Panc1 (cell line): ENCODE measurements at regions of chr6 and their contacts with region 1.

Region 1: DNA sequence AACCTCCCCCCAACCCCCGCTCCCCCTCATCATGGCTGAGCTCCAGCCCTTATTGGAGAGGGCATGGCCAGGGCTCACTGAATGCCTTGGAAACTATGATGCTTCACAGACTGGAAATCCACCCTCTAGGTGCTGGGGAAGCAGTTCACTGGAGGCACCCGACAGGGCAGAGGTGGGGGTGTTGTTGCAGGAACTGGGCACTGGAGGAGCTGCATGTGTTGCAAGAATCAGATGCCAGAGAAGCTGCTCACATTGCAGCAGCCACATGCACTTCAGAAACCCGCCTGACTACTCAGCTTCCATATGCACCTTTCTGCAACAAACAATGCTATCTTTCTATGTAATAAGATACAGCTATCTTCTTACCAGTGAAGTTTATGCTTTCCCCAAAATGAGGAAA is 7.9 kb upstream of the TBPL1 start:
- DNase-seq: no peak
- ATAC-seq: peak; percentile 42; the same call in 1 of the 2 replicates
- H3K4me3 ChIP-seq: no peak overlapping the region
- H3K27ac ChIP-seq: no peak overlapping the region
- H3K4me1 ChIP-seq: no peaks in the 10 kb centered on the region
- H3K27me3 ChIP-seq: no peaks in the 10 kb centered on the region
- CTCF ChIP-seq: no peak

Region 2: DNA sequence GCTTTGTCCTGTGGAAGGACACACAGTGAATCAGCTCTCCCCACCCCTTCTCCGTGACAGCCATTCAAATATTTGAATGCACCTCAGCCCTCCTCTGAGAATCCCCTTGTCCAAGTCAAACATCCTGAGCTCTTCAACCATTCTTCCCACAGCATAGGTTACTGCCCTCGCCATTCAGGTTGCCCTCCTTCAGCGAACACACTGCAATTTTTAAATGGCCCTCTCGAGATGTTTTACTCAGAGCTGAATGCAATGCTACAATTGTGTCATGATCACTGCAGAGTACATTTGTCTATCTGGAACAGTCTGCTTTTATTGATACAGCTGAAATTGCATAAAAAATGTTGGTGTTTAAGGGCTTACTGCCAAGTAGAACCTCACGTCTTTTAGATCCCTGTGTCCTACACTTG is 58.4 kb after region 1 on chr6:
- CTCF ChIA-PET with region 1: no interaction called
- POLR2A ChIA-PET with region 1: interaction called, 10 read pairs
- in situ Hi-C with region 1: no loop called
- intact Hi-C with region 1: no loop called
- DNase-seq: no peak
- ATAC-seq: no peak
- H3K4me3 ChIP-seq: no peak overlapping the region
- H3K27ac ChIP-seq: no peak overlapping the region
- H3K4me1 ChIP-seq: no peaks in the 10 kb centered on the region; the same call in 1 of the 2 replicates
- H3K27me3 ChIP-seq: no peaks in the 10 kb centered on the region
- CTCF ChIP-seq: no peak